ENCODE measurements at regions of chr4 and their contacts with region 1.

Region 1: DNA sequence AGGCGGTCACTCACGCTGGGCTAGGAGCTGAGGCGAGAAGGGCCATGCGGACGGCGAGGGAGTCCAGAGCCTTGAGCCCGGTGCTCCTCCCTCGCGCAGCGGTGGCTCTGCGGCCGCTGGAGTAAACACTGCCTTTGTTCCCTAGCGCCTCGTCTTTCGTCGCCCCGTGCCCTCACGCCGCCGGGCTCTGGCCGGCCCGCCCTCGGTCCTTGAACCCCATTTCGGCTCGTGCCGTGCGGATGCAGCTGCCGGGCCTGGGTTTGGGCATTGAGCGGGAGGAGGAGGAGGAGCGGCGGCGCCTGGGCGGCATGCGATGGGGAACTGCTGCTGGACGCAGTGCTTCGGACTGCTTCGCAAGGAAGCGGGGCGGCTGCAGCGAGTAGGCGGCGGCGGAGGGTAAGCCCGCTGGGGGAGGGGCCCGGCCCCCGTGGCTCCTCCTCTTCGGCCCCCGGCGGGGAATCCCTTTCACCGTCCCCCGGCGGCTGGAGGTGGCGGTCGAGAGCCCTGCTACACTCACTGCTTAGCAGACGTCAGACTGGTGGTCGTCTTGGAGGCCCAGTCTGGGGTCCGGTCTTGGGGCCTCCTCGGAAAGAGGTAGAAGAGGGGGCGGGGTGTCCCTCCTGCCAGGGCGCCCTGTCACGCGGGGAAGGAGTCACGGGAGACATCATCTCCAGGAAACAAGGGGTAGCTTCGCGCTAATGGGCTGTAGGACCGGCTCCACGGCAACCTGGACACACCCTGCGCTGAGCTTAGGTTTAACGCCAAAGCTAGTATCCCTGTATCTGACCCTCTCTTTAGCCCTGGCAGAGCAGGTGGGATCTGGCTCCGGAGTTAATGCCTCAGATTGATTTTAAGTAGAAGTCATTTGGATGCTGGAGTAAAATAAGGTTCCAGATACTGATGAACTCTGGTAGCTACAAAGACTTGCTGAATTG is at the start of gene AP1AR:
- DNase-seq: peak; percentile 80
- H3K4me3 Mint-ChIP-seq: peak within 1 kb of the TSS; percentile 90
- H3K27ac Mint-ChIP-seq: peak within 1 kb of the TSS; percentile 98
- H3K4me1 Mint-ChIP-seq: peaks cover 32% of the 10 kb centered on the region
- H3K27me3 Mint-ChIP-seq: peaks cover under 1% of the 10 kb centered on the region
- total RNA-seq, gene AP1AR: 14.7 to 15.2 TPM

Region 2: GRCh38 chr4:112119353-112119783 is 112.7 kb before region 1 on chr4:
- CTCF ChIA-PET with region 1: no interaction called
- intact Hi-C with region 1: loop called (anchors 1 kb)
- DNase-seq: peak; percentile 29
- H3K4me3 Mint-ChIP-seq: no peak overlapping the region
- H3K27ac Mint-ChIP-seq: peak overlapping the region; percentile 89
- H3K4me1 Mint-ChIP-seq: peaks cover 22% of the 10 kb centered on the region
- H3K27me3 Mint-ChIP-seq: no peaks in the 10 kb centered on the region

Region 3: GRCh38 chr4:112199040-112199439 is 33.0 kb before region 1 on chr4:
- CTCF ChIA-PET with region 1: interaction called, 4 read pairs
- intact Hi-C with region 1: loop called (anchors 1 kb)
- DNase-seq: no peak
- H3K4me3 Mint-ChIP-seq: no peak overlapping the region
- H3K27ac Mint-ChIP-seq: no peak overlapping the region
- H3K4me1 Mint-ChIP-seq: peaks cover 21% of the 10 kb centered on the region
- H3K27me3 Mint-ChIP-seq: peaks cover 10% of the 10 kb centered on the region

Region 4: GRCh38 chr4:112302320-112303274 is 70.6 kb after region 1 on chr4:
- CTCF ChIA-PET with region 1: no interaction called
- intact Hi-C with region 1: loop called (anchors 2 kb)
- DNase-seq: peak; percentile 47
- H3K4me3 Mint-ChIP-seq: no peak overlapping the region
- H3K27ac Mint-ChIP-seq: no peak overlapping the region
- H3K4me1 Mint-ChIP-seq: peaks cover 21% of the 10 kb centered on the region
- H3K27me3 Mint-ChIP-seq: no peaks in the 10 kb centered on the region

Region 5: DNA sequence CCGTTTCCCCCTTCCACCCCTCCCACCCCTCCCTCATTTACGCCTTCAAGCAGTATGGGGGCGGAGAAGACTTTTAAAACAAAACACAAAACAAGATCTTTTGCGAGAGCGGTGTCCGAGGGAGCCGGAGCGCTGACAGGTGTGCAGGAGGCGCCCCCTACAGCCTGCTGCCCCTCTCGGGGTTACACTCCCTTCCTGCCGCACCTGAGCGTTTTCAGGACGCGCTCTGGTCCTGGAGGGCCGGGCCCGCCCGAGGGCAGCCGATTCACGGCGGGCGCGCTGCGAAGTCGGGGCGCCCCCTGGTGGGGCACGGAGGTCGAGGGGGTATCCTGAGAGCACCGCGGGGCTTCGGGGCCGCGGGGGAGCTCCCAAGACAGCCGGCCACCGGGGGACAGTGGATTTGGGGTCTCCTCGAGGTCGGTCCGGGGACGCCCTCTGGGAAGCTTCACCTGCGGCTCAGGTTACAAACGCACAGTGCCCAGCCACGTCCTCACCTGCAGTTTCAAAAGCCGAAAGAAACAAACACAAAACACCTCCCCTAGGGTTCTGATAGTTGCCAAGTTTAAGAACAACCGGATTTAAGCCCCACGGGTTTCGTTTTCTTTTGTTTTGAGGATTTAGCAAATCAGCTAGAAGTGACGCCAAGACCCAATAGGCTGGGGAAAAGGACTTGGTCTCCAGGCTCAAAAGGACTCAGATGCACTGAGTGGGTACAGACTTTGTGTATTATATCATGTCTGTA is 291.9 kb after region 1 on chr4:
- CTCF ChIA-PET with region 1: interaction called, 3 read pairs
- intact Hi-C with region 1: loop called (anchors 1 kb)
- DNase-seq: peak; percentile 90
- H3K4me3 Mint-ChIP-seq: peak overlapping the region; percentile 75
- H3K27ac Mint-ChIP-seq: no peak overlapping the region
- H3K4me1 Mint-ChIP-seq: peaks cover 31% of the 10 kb centered on the region
- H3K27me3 Mint-ChIP-seq: peaks cover 45% of the 10 kb centered on the region

Region 6: DNA sequence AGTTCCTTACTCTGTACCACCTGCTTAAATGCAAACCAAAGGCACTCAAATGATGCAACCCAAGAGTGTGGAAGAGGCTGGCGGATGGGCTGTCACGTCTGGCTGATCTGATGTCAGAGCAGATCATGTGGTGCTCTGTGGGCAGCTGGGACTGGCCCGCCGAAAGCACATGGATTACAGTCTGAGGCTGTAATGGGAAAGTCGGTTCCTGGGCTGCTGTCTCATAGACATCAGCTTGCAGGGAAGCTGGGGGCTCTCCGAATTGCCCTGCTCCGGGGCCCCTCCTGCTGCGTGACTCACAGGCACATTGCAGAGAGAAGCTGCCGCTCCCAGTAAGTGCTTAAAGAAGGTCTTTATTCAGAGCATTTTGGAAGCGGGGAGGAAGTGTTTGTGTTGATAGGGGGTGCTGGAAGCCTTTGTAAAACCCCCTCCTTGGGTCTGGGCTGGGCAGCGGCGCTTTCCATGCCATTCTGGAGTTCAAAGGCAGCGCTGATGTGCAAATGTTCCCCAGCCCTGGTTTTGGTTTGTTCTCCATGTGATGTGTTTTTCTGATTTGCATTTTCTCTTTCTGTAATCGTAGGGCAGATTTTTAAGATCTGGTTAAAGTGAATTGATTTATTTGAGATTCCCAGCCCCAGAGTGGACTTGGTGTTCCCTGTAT is 586.0 kb after region 1 on chr4:
- CTCF ChIA-PET with region 1: no interaction called
- intact Hi-C with region 1: loop called (anchors 2 kb)
- DNase-seq: peak; percentile 88
- H3K4me3 Mint-ChIP-seq: peak overlapping the region; percentile 79
- H3K27ac Mint-ChIP-seq: peak overlapping the region; percentile 62
- H3K4me1 Mint-ChIP-seq: peaks cover 15% of the 10 kb centered on the region
- H3K27me3 Mint-ChIP-seq: peaks cover 36% of the 10 kb centered on the region